Psoas muscle (tissue), 8 donors: ENCODE measurements at regions of chr15 and their contacts with region 1.

Region 1: DNA sequence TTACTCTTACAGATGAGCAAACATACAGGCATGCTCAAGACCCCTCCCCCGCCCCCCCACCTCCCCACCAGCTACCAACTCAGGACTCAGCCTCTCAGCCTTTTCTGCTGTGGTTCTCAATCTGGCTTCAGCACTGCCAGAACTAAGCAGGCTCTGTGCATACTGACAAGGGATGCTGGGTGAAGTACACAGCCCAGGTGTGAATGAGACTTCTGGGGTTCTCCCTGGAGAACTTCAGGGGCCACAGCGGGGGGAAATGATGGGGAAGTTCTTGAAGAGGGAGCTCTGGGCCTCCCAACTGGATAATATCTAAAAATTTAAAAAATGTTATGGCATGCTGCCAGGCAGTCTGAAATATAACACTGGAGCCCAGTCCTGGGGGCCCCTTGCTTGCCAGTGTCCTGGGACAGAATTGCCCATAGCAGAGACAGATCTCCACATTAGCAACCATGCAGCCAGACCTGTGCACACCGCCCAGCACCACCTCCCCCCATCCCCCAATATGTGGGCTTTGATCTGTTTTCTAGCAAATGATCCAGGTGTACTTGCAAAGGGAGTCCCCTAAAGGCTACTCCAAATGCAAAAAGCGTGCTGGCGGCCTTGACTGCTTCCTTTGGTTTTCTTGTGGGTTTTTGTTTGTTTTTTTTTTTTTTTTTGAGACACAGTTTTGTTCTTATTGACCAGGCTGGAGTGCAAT is 41.4 kb downstream of the PGPEP1L start:
- DNase-seq: no peak
- ATAC-seq: peak in 1 of 4 donors; percentile 22
- H3K4me3 ChIP-seq: no peak overlapping the region
- H3K27ac ChIP-seq: no peak overlapping the region
- H3K4me1 ChIP-seq: peaks cover 14% of the 10 kb centered on the region
- H3K27me3 ChIP-seq: no peaks in the 10 kb centered on the region
- CTCF ChIP-seq: no peak

Region 2: DNA sequence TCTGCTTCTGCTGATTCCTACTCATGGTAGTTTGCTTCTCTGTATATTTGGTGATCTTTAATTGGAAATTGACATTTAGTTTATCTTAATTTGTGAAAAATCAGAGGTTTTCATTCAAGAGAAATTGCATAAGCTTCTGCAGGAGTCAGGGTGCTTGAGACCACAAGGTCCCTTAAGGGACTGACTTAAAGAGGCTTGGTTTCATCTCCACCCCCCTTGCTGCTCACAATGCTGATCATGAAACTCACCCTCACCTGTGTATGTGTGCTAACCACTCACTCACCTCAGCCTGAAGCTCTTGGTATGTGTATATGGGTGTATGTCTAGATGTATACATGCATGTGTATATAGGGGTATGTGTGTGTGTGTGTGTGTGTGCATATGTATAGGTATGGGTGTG is 29.9 kb after region 1 on chr15:
- intact Hi-C with region 1: loop called in 1 of 2 experiments (anchors 5 kb)
- DNase-seq: no peak
- ATAC-seq: peak in 1 of 4 donors; percentile 7
- H3K4me3 ChIP-seq: no peak overlapping the region
- H3K27ac ChIP-seq: no peak overlapping the region
- H3K4me1 ChIP-seq: peaks cover 11% of the 10 kb centered on the region
- H3K27me3 ChIP-seq: no peaks in the 10 kb centered on the region
- CTCF ChIP-seq: no peak

Region 3: GRCh38 chr15:99187936-99188335 is 221.7 kb after region 1 on chr15:
- intact Hi-C with region 1: loop called in 1 of 2 experiments (anchors 5 kb)
- DNase-seq: no peak
- ATAC-seq: no peak
- H3K4me3 ChIP-seq: no peak overlapping the region
- H3K27ac ChIP-seq: no peak overlapping the region
- H3K4me1 ChIP-seq: peaks cover 2% of the 10 kb centered on the region
- H3K27me3 ChIP-seq: no peaks in the 10 kb centered on the region
- CTCF ChIP-seq: no peak